Prostate gland (tissue), 2 donors: ENCODE measurements at regions of chr7 and their contacts with region 1.

Region 1: GRCh38 chr7:44196450-44196872 is 4.3 kb upstream of the YKT6 start:
- DNase-seq: no peak
- H3K4me3 ChIP-seq: no peak overlapping the region
- H3K27ac ChIP-seq: no peak overlapping the region
- H3K4me1 ChIP-seq: no peaks in the 10 kb centered on the region
- H3K27me3 ChIP-seq: no peaks in the 10 kb centered on the region
- CTCF ChIP-seq: peak in 3 of 4 experiments; percentile 21 to 50 (median 48)
- POLR2A ChIP-seq: no peak

Region 2: DNA sequence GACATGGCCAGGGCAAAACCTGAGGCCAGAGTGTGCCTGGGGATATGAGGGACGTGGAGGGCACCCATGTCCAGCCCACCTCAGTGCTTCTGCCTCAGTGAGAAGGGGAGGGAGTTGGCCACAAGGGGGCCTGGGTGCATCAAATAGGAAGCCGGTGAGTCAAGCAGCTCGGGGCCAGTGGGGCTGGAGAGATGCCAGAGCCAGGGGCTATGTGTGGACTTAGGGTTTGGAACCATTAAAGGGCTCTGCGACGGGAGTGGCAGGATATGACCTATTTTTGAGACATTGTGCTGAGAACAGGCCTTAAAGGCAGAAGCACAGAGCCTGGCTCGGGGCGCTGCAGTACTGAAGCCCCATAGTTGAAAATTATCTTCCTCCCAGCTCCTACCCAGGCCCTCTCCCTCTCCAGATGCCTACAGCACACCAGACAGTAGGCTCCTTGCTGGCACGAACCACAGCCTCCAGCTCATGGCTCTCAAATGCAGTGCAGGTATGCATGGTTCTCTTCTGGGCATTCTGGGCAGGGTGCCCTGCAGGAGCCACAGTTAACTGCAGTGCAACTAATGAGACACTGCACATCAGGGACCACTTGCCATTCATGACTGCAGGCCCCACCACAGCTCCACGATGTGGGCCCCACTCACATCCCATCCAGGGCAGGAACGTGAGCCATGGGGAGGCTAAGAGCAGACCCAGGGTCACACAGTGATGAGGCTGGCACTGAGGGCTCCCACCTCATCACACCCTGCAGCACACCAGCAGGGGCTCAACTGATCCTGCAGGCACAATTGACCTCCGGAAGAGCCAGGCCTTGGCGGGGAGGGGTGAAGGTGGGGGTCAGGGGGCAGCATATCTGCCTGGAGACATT is 123.9 kb before region 1 on chr7:
- intact Hi-C with region 1: loop called (anchors 10 kb)
- DNase-seq: peak; percentile 31
- H3K4me3 ChIP-seq: no peak overlapping the region
- H3K27ac ChIP-seq: peak overlapping the region; percentile 9 to 41
- H3K4me1 ChIP-seq: peaks cover 9% of the 10 kb centered on the region
- H3K27me3 ChIP-seq: no peaks in the 10 kb centered on the region
- CTCF ChIP-seq: peak; percentile 33 to 71 (median 47)
- POLR2A ChIP-seq: no peak

Region 3: DNA sequence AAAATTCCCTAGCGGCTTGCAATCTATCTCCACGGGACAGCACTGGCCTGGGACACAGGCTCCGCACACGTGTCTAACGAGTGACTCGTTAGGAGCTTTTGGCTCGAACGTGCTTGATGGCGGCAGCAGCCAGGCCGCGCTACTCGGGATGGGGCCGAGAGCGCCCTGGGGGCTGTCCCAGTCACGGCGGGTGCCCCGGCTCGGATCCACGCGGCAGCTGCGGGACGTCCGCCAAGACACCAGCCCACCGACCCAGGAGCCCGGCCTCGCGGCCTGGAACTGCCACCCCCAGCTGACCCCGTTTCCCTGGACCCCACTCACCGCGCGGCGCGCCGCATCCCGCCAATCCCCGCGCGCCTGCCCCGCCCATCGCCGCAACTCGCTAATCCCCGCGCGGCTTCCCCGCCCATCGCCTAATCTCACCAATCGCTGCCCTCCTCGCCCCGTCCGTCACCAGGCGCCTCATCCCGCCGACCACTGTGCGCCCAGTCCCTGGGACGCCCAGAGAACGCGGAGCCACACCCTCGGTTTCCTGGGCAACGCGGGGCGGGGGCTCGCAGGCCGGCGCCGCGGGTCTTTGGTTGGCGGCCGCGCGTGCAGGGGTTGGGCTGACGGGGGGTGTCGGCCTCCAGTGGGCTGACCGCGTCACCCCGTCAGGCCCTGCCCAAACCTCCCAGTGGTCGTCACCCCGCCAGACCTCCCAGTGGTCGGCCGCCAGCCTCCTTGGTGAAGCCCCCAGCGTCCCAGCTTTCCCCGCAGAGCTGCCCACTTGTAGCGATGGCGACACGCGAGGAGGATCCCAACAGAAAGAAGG is 73.1 kb before region 1 on chr7 and contains the start of gene POLD2:
- intact Hi-C with region 1: loop called (anchors 2 kb)
- DNase-seq: peak; percentile 97
- H3K4me3 ChIP-seq: peak within 1 kb of the TSS; percentile 73 to 74
- H3K27ac ChIP-seq: peak within 1 kb of the TSS; percentile 69 to 74
- H3K4me1 ChIP-seq: peaks cover 7% of the 10 kb centered on the region
- H3K27me3 ChIP-seq: no peaks in the 10 kb centered on the region
- CTCF ChIP-seq: peak in 1 of 4 experiments; percentile 15
- POLR2A ChIP-seq: peak; percentile 52
- total RNA-seq, gene POLD2: 53.1 to 65.9 TPM